ENCODE measurements at regions of chr3 and their contacts with region 1.

Region 1: DNA sequence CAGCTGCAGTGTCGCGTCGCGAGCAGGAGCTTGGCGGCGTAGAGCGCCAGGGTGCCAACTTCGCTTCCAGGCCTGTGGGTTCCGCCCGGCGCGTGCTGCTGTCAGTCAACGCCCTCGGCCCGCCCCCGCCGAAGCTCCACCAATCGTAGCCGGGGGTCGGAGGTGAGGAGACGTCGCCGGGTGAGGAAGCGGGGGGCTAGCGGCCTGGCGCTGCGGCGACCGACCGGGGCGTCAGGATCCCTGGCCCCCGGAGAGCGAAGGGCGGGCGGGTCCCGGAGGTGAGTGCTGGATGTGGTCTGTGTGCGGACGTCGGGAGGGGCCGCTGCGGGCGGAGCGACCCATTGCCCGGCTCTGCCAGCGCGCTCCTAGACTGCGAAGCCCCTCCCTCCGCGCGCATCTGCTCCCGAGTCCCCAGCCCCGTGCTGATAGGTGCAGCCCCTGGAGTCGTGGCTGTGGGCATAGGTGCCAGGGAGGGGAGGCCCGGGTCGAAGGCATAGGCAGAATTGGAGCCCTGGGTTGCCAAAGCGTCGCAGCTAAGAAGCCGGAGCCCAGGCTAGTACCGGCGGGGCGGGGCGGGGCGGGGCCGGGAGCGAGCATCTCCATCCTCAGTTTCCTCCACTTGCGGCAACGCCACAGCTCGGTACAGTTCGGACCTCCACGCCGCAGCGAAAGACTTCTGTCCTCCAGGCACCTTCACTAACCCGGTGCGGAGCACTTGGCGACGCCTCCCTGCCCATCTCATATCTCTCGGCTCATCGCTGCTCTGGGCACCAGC is at the start of gene NXPE3:
- DNase-seq: peak; percentile 95 to 96
- H3K4me3 ChIP-seq: peak within 1 kb of the TSS; percentile 66 to 90
- H3K27ac ChIP-seq: peak within 1 kb of the TSS; percentile 91 to 93
- H3K4me1 ChIP-seq: peaks cover 0 to 31% (median 21%) of the 10 kb centered on the region in 4 donors
- H3K27me3 ChIP-seq: no peaks in the 10 kb centered on the region
- CTCF ChIP-seq: no peak

Region 2: GRCh38 chr3:101615525-101615924 is 163.7 kb before region 1 on chr3:
- intact Hi-C with region 1: no loop called
- DNase-seq: no peak
- H3K4me3 ChIP-seq: no peak overlapping the region
- H3K27ac ChIP-seq: no peak overlapping the region
- H3K4me1 ChIP-seq: no peaks in the 10 kb centered on the region
- H3K27me3 ChIP-seq: no peaks in the 10 kb centered on the region
- CTCF ChIP-seq: no peak

Region 3: GRCh38 chr3:101690972-101691371 is 88.3 kb before region 1 on chr3:
- intact Hi-C with region 1: loop called (anchors 5 kb)
- DNase-seq: no peak
- H3K4me3 ChIP-seq: no peak overlapping the region
- H3K27ac ChIP-seq: no peak overlapping the region
- H3K4me1 ChIP-seq: peaks cover 0 to 19% (median 8%) of the 10 kb centered on the region in 4 donors
- H3K27me3 ChIP-seq: no peaks in the 10 kb centered on the region
- CTCF ChIP-seq: no peak

Region 4: GRCh38 chr3:101724329-101725193 is 54.7 kb before region 1 on chr3 and contains the start of gene CEP97:
- intact Hi-C with region 1: loop called (anchors 5 kb)
- DNase-seq: peak; percentile 95
- H3K4me3 ChIP-seq: peak within 1 kb of the TSS; percentile 67 to 82
- H3K27ac ChIP-seq: peak within 1 kb of the TSS; percentile 71 to 82
- H3K4me1 ChIP-seq: peaks cover 0 to 22% (median 0%) of the 10 kb centered on the region in 4 donors
- H3K27me3 ChIP-seq: no peaks in the 10 kb centered on the region
- CTCF ChIP-seq: no peak

Region 5: GRCh38 chr3:102180291-102181039 is 401.2 kb after region 1 on chr3:
- intact Hi-C with region 1: no loop called
- DNase-seq: no peak
- H3K4me3 ChIP-seq: peak overlapping the region in 1 of 2 donors; percentile 15
- H3K27ac ChIP-seq: peak overlapping the region; percentile 72 to 75
- H3K4me1 ChIP-seq: peaks cover 0 to 59% (median 37%) of the 10 kb centered on the region in 4 donors
- H3K27me3 ChIP-seq: no peaks in the 10 kb centered on the region
- CTCF ChIP-seq: no peak

Measured in tibial artery (tissue), 4 donors.